HAP-1 (cell line): ENCODE measurements at regions of chr2 and their contacts with region 1.

Region 1: GRCh38 chr2:128736689-128737545 is 418.2 kb upstream of the HS6ST1 start:
- DNase-seq: peak; percentile 58 to 84
- H3K4me3 ChIP-seq: no peak overlapping the region
- H3K4me1 ChIP-seq: no peaks in the 10 kb centered on the region
- H3K27me3 ChIP-seq: no peaks in the 10 kb centered on the region

Region 2: GRCh38 chr2:128069769-128070168 is 667.1 kb before region 1 on chr2:
- in situ Hi-C with region 1: loop called (anchors 25 kb)
- DNase-seq: no peak
- H3K4me3 ChIP-seq: no peak overlapping the region
- H3K4me1 ChIP-seq: peaks cover 2% of the 10 kb centered on the region; the same call in 1 of the 2 replicates
- H3K27me3 ChIP-seq: no peaks in the 10 kb centered on the region